ENCODE measurements at regions of chr3 and their contacts with region 1.

Region 1: GRCh38 chr3:180601688-180602666 is at the start of gene TTC14:
- DNase-seq: peak; percentile 94
- H3K4me3 ChIP-seq: peak within 1 kb of the TSS; percentile 59 to 92 (median 88)
- H3K27ac ChIP-seq: peak within 1 kb of the TSS; percentile 34
- H3K4me1 ChIP-seq: peaks cover 8% of the 10 kb centered on the region
- H3K27me3 ChIP-seq: peaks cover 2 to 4% of the 10 kb centered on the region in 2 experiments
- CTCF ChIP-seq: peak in 1 of 2 donors; percentile 13
- POLR2A ChIP-seq: peak; percentile 90
- total RNA-seq, gene TTC14: 33.6 and 34.8 TPM in 2 replicates

Region 2: DNA sequence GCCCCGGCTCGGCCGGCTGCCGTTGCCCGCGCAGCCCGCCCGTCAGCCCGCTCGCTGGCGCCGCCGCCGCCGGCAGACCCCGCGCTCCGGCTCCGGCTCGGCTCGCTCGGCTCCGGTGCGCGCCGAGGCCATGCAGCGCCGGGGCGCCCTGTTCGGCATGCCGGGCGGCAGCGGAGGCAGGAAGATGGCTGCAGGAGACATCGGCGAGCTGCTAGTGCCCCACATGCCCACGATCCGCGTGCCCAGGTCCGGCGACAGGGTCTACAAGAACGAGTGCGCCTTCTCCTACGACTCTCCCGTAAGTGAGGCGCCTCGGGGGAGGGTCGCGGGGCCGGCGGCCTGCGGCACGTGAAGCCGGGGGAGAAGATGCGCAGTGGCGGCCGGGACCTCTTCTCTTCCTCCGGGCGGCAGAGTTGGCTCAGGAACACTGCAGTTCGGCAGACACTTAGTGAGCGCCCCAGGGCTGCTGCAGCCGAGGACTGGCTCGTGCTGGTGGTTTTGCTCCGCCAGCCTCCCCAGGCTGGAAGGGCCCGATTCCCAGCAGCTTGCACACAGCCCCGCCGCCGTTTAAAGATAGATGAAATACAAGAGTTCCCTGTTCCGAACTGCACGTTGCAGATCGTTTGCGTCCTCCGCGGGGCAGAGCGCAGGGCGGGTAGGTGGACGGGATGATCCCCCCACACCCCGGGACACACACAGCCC is 948.7 kb before region 1 on chr3:
- CTCF ChIA-PET with region 1: interaction called, 3 read pairs
- POLR2A ChIA-PET with region 1: no interaction called
- dilution Hi-C with region 1: no loop called
- intact Hi-C with region 1: loop called (anchors 5 kb)
- DNase-seq: peak; percentile 80
- H3K4me3 ChIP-seq: peak overlapping the region; percentile 34 to 86 (median 81)
- H3K27ac ChIP-seq: peak overlapping the region; percentile 80
- H3K4me1 ChIP-seq: peaks cover 13% of the 10 kb centered on the region
- H3K27me3 ChIP-seq: no peaks in the 10 kb centered on the region
- CTCF ChIP-seq: no peak
- POLR2A ChIP-seq: no peak

Region 3: GRCh38 chr3:179768080-179768479 is 833.9 kb before region 1 on chr3:
- CTCF ChIA-PET with region 1: interaction called, 5 read pairs
- POLR2A ChIA-PET with region 1: no interaction called
- dilution Hi-C with region 1: no loop called
- intact Hi-C with region 1: loop called (anchors 5 kb)
- DNase-seq: peak; percentile 43
- H3K4me3 ChIP-seq: no peak overlapping the region
- H3K27ac ChIP-seq: no peak overlapping the region
- H3K4me1 ChIP-seq: peaks cover 16% of the 10 kb centered on the region
- H3K27me3 ChIP-seq: no peaks in the 10 kb centered on the region
- CTCF ChIP-seq: peak; percentile 37 to 38
- POLR2A ChIP-seq: no peak

Region 4: GRCh38 chr3:180646187-180646790 is 44.3 kb after region 1 on chr3:
- CTCF ChIA-PET with region 1: no interaction called
- POLR2A ChIA-PET with region 1: no interaction called
- dilution Hi-C with region 1: no loop called
- intact Hi-C with region 1: no loop called
- DNase-seq: peak; percentile 2
- H3K4me3 ChIP-seq: no peak overlapping the region
- H3K27ac ChIP-seq: no peak overlapping the region
- H3K4me1 ChIP-seq: no peaks in the 10 kb centered on the region
- H3K27me3 ChIP-seq: peaks cover 0 to 2% of the 10 kb centered on the region in 2 experiments
- CTCF ChIP-seq: peak in 1 of 2 donors; percentile 7
- POLR2A ChIP-seq: no peak

Region 5: DNA sequence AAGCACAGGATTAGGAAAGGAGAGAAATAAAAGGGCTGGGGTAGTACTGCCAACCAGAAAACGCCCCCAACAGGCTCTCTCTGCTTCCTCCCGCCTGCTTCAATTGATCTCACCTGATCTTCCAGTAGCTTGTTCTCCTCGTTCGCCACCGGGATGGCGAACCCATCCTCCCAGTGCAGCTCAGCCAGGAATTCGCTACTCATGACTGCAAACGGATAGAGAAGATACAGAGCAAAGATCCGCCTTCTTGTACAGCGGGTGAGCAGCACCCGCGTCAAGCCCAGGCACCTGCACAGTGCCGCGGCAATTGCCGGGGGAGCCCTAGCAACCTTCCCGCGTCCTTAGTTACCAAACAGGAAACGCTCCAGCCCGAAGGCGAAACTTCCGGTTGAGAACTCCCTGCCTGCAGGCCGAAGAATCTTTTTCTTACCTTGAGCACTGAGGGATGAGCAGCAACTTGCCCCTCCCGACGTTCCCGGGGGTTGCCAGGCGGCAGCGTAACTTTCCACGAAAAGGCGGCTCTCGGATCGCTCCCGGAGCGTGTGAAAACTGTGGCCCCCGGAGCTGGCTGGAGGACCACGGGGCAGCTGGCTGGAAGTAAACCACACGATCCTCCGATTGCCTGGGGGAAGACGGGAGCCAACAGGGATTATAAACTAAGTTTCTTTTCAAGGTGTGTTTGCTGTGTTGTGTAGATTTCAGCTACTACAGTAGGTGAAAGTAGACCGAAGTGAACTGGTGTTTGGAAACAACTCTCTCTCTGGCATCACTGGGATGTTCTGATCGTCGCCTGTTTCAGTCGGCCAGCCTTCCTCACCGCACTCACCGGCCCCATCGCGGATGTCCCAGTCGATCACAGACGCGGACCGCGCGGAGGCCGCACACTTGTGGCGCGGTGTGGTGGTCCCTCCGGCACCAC is 77.5 kb after region 1 on chr3 and contains the start of gene CCDC39:
- CTCF ChIA-PET with region 1: no interaction called
- POLR2A ChIA-PET with region 1: no interaction called
- dilution Hi-C with region 1: no loop called
- intact Hi-C with region 1: loop called (anchors 1 kb)
- DNase-seq: peak; percentile 59
- H3K4me3 ChIP-seq: peak within 1 kb of the TSS; percentile 42 to 59 (median 56)
- H3K27ac ChIP-seq: no peak within 1 kb of the TSS
- H3K4me1 ChIP-seq: peaks cover 12% of the 10 kb centered on the region
- H3K27me3 ChIP-seq: peaks cover 9 to 38% of the 10 kb centered on the region in 2 experiments
- CTCF ChIP-seq: no peak
- POLR2A ChIP-seq: no peak
- total RNA-seq, gene CCDC39: not detected in 2 replicates

Region 6: GRCh38 chr3:180989291-180990163 is 387.6 kb after region 1 on chr3 and contains the start of gene DNAJC19:
- CTCF ChIA-PET with region 1: no interaction called
- POLR2A ChIA-PET with region 1: no interaction called
- dilution Hi-C with region 1: no loop called
- intact Hi-C with region 1: loop called (anchors 10 kb)
- DNase-seq: peak; percentile 96
- H3K4me3 ChIP-seq: peak within 1 kb of the TSS; percentile 2 to 78 (median 52)
- H3K27ac ChIP-seq: peak within 1 kb of the TSS; percentile 5
- H3K4me1 ChIP-seq: peaks cover 6% of the 10 kb centered on the region
- H3K27me3 ChIP-seq: peaks cover 2 to 5% of the 10 kb centered on the region in 2 experiments
- CTCF ChIP-seq: no peak
- POLR2A ChIP-seq: peak; percentile 93
- total RNA-seq, gene DNAJC19: 43.4 and 50.6 TPM in 2 replicates